Prostate gland (tissue), 2 donors: ENCODE measurements at regions of chr21 and their contacts with region 1.

Region 1: GRCh38 chr21:42997053-42997452 is 22.7 kb downstream of the PKNOX1 start:
- DNase-seq: no peak
- H3K4me3 ChIP-seq: no peak overlapping the region
- H3K27ac ChIP-seq: peak overlapping the region; percentile 22 to 41
- H3K4me1 ChIP-seq: no peaks in the 10 kb centered on the region
- H3K27me3 ChIP-seq: no peaks in the 10 kb centered on the region
- CTCF ChIP-seq: no peak
- POLR2A ChIP-seq: no peak

Region 2: DNA sequence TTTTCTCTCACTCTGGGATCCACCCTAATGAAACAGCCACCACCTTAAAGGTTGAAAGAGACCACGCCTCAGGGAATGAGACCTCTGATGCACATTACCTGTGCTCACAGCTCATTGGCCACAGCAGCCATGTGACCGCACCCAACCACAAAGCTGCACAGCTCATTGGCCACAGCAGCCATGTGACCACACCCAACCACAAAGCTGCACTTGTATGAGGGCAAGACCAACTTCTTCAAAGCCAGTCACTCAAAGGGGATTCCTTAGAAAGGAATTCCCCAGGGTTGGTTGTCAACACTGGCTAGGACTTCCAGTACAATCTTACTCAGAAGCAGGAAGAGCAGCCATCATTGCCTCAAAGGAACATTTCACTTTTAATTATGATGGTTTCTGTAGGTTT is 387.2 kb before region 1 on chr21:
- intact Hi-C with region 1: no loop called
- DNase-seq: no peak
- H3K4me3 ChIP-seq: no peak overlapping the region
- H3K27ac ChIP-seq: no peak overlapping the region
- H3K4me1 ChIP-seq: no peaks in the 10 kb centered on the region
- H3K27me3 ChIP-seq: no peaks in the 10 kb centered on the region
- CTCF ChIP-seq: no peak
- POLR2A ChIP-seq: no peak

Region 3: DNA sequence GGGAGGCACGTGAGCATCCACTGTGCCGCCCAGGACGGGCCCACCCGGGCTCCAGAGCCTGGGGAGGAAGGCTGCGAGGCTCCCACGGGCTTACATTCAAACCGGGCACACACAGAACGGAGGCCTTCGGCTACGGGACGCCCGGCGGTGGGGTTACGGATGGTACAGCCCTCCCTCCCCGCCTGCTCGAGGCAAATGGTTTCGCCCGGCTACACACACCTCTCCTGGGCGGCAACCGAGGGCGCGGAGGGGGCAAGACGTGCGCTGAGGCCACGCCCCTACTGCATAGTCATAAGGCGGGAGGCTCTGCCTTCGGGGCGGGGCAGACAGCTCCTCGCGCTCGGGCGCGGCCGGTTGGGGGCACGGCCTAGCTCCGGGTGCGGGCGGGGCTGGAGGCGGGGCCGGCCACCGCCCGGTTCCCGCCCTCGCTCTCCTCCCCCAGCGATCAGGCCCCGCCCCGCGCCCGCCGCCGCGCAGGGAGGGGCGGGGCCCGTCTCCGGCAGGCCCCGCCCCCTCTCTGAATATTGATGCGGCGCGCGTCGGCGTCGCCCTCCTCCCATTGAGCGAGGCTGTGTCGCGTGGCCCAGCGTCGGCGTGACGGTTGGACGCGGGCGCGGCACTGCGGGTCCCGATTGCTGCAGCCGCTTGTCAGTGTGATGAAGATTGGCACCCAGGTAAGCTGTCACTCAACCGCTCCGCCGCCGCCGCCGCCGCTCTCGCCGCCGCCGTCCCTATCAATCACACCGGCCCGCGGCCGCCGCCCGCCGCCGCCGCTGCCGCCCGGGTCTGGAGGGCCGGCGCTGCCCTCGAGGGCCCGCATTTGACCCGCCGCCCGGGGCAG is 22.8 kb before region 1 on chr21 and contains the start of gene PKNOX1:
- intact Hi-C with region 1: loop called (anchors 1 kb)
- DNase-seq: peak; percentile 99
- H3K4me3 ChIP-seq: peak within 1 kb of the TSS; percentile 75 to 88
- H3K27ac ChIP-seq: peak within 1 kb of the TSS; percentile 98 to 100
- H3K4me1 ChIP-seq: no peaks in the 10 kb centered on the region
- H3K27me3 ChIP-seq: no peaks in the 10 kb centered on the region
- CTCF ChIP-seq: peak in 1 of 4 experiments; percentile 10
- POLR2A ChIP-seq: peak; percentile 65
- total RNA-seq, gene PKNOX1: 38.0 to 42.4 TPM